GM10248 (cell line): ENCODE measurements at regions of chr3 and their contacts with region 1.

Region 1: DNA sequence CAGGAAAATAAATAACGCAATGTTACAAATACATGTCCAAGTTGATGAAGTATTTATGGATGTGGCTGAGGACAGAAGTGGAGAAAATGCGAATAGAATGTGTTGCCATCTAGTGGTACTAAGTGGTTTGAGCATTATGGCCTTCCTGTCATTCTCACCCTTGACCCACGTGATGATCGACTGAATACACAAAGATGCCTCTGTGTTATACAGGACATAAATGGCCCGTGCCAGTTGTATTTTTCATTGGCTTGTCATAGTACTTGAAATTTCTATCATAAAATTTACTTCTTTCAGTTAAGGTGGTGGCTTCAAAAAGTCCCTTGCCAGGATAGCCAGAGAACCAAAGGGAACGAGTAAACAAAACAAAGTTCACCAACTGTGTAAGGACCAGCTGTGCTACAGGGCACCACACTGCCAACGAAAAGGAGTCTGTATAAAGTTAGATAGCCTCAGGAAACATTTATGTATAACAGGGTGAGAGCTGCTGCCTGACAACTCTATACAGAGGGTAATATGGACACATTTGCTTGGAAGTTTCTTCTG is 103.7 kb downstream of the MYH15 start:
- DNase-seq: peak; percentile 57
- CTCF ChIP-seq: peak; percentile 77

Region 2: GRCh38 chr3:108391917-108392593 is 14.7 kb before region 1 on chr3:
- CTCF ChIA-PET with region 1: interaction called, 18 read pairs
- POLR2A ChIA-PET with region 1: no interaction called
- DNase-seq: no peak
- CTCF ChIP-seq: no peak